AG04450 (cell line): ENCODE measurements at regions of chr2 and their contacts with region 1.

Region 1: DNA sequence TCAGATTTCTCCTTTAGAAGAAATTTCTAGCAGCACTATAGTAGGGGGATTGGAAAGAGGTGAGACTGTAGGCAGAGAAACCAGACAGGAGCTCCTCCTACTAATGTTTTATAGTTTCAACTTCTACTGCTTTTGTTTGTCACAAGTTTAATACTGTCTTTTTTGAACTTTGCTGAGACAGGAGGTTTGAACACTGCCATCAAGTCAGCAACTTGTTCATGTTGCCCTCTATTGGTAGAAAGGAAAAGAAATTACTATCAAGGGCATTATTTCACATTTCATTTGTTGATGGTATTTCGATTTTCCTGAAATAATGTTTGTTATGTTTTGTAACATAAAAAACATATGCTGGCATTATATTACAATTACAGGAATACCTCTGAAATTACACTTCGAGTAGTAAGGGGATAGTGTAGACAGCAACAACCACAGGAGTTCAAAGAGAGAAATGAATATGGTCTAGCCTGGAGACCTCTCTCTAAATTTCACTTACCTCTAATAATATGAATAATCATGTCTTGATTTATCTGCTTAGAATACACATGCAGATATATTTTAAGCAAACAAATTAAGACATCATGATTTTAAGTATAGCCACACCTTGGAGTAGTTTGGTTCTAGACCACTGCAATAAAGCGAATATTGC is 12.4 kb upstream of the CCDC88A start:
- DNase-seq: no peak
- H3K4me3 ChIP-seq: no peak overlapping the region
- H3K27ac ChIP-seq: no peak overlapping the region
- H3K27me3 ChIP-seq: no peaks in the 10 kb centered on the region
- CTCF ChIP-seq: peak; percentile 68

Region 2: DNA sequence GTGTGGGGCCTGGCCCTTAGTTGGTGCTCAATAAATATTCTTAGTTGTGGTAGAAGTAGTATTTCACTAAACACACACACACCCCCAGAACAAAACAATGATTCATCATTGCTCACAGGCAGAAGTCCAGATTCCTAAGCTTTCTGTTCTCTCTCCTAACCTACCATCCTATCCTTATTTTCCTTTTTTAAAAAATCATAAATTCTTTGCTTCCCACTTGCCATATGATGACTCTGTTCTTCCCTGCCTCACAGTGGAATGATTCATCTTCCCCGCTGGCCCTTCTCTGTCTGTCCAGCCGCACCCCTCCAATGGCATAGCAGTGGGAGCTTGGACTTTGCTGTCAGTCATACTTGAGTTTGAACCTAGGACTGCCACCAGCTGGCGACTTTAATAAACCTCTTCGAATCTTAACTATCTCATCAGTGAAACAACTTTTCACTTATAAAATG is 703.4 kb before region 1 on chr2:
- CTCF ChIA-PET with region 1: no interaction called
- POLR2A ChIA-PET with region 1: no interaction called
- DNase-seq: peak; percentile 30
- H3K4me3 ChIP-seq: no peak overlapping the region
- H3K27ac ChIP-seq: no peak overlapping the region
- H3K27me3 ChIP-seq: peaks cover 28% of the 10 kb centered on the region
- CTCF ChIP-seq: no peak

Region 3: DNA sequence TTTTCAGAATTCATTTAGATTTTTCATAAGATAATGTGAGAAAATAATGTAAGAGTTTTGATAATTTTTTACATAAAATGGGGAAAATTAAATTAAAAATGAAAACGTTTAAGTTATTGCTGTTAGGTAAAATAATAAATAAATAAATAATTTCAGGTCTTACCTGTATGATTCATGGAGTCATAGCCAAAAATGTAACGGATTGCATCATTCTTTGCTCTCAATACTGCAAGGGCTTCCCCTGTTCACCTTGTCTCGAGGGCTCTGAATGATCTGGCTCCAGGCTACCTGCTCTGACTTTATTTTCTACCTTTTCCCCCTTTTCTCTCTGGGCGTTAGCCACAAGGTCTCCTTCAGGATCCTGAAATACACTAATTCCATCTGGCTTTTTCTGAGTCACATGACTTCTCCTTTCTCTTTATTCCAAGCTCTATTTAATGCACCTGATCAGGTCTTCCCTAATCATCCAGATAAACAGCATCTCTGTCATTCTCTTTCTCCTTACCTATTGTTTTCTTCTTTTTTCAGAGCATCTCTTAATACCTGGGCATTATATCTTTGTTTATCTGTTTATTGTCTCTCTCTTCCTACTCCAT is 57.5 kb after region 1 on chr2:
- CTCF ChIA-PET with region 1: interaction called, 11 read pairs
- POLR2A ChIA-PET with region 1: no interaction called
- DNase-seq: no peak
- H3K4me3 ChIP-seq: no peak overlapping the region
- H3K27ac ChIP-seq: no peak overlapping the region
- H3K27me3 ChIP-seq: no peaks in the 10 kb centered on the region
- CTCF ChIP-seq: no peak

Region 4: GRCh38 chr2:55526174-55526573 is 94.1 kb after region 1 on chr2:
- CTCF ChIA-PET with region 1: no interaction called
- POLR2A ChIA-PET with region 1: no interaction called
- DNase-seq: no peak
- H3K4me3 ChIP-seq: no peak overlapping the region
- H3K27ac ChIP-seq: no peak overlapping the region
- H3K27me3 ChIP-seq: no peaks in the 10 kb centered on the region
- CTCF ChIP-seq: no peak